Naive thymus-derived CD4-positive, alpha-beta T cell (primary cell): ENCODE measurements at regions of chr14 and their contacts with region 1.

Region 1: DNA sequence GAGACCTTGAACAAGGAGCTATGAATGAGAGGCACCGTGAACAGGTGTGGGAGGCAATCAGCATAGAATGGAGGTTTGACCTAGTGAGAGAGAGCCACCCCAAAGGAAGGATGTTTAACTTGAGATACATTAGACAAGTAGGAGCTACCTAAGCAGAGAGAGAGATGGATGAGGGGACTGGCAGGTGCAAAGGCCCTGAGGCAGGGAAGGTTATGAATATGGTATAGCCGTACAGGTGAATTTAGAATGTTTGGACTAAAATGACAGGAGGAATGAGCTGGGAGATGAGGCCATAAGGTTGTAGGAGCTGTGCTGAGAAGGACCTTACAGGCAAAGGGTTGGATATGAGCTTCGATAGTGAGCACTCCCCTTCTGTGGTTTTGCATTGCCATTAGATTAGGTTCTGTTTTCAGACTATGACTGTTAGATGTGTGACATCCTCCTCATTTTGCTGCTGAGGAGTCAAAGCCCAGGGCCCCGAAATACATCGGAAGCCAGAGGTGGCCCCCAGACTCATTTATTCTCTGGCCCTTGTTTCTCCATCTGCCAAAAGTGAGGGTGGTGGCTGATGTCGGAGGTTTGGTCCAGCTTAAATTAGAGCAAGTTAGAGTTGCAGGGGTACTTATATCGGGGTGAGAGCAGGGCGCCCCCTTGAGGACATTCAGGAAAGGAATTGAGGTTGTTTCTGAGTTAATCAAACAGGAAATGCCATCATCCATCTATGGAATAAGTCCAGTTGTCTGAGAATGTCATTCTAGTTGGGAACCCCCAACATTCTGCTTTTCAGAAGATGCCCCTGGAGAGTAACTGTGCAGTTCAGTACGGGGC is 29.4 kb downstream of the SLC24A4 start:
- DNase-seq: peak in 2 of 9 donors; percentile 6 to 33
- ATAC-seq: no peak
- H3K4me3 ChIP-seq: no peak overlapping the region
- H3K4me3 Mint-ChIP-seq: no peak overlapping the region
- H3K27ac ChIP-seq: no peak overlapping the region
- H3K27ac Mint-ChIP-seq: no peak overlapping the region
- H3K4me1 ChIP-seq: no peaks in the 10 kb centered on the region
- H3K4me1 Mint-ChIP-seq: peaks cover 0 to 6% (median 0%) of the 10 kb centered on the region in 7 donors
- H3K27me3 ChIP-seq: no peaks in the 10 kb centered on the region
- H3K27me3 Mint-ChIP-seq: peaks cover 0 to 39% (median 4%) of the 10 kb centered on the region in 5 donors

Region 2: DNA sequence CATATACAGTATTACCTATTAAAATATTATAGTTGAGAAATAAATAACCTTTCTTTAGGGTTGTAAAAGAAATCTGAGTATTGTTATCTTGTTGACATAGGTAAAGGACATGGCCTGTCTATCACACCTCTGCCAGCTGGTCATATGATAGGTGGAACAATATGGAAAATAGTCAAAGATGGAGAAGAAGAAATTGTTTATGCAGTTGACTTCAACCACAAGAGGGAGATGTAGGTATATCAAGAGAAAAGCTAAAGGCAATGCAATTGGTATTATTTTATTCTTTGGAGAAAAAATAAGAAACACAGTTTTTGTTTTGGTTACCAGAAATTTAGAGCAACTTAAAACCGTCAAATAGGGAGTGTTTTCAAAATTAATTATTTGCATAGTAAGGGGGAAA is 217.1 kb before region 1 on chr14:
- CTCF ChIA-PET with region 1: no interaction called
- POLR2A ChIA-PET with region 1: no interaction called
- intact Hi-C with region 1: loop called in 1 of 2 experiments (anchors 2 kb)
- DNase-seq: peak in 5 of 9 donors; percentile 10 to 37 (median 27)
- ATAC-seq: no peak
- H3K4me3 ChIP-seq: no peak overlapping the region
- H3K4me3 Mint-ChIP-seq: no peak overlapping the region
- H3K27ac ChIP-seq: no peak overlapping the region
- H3K27ac Mint-ChIP-seq: no peak overlapping the region
- H3K4me1 ChIP-seq: no peaks in the 10 kb centered on the region
- H3K4me1 Mint-ChIP-seq: peaks cover 5 to 19% (median 14%) of the 10 kb centered on the region in 7 donors
- H3K27me3 ChIP-seq: no peaks in the 10 kb centered on the region
- H3K27me3 Mint-ChIP-seq: no peaks in the 10 kb centered on the region

Region 3: DNA sequence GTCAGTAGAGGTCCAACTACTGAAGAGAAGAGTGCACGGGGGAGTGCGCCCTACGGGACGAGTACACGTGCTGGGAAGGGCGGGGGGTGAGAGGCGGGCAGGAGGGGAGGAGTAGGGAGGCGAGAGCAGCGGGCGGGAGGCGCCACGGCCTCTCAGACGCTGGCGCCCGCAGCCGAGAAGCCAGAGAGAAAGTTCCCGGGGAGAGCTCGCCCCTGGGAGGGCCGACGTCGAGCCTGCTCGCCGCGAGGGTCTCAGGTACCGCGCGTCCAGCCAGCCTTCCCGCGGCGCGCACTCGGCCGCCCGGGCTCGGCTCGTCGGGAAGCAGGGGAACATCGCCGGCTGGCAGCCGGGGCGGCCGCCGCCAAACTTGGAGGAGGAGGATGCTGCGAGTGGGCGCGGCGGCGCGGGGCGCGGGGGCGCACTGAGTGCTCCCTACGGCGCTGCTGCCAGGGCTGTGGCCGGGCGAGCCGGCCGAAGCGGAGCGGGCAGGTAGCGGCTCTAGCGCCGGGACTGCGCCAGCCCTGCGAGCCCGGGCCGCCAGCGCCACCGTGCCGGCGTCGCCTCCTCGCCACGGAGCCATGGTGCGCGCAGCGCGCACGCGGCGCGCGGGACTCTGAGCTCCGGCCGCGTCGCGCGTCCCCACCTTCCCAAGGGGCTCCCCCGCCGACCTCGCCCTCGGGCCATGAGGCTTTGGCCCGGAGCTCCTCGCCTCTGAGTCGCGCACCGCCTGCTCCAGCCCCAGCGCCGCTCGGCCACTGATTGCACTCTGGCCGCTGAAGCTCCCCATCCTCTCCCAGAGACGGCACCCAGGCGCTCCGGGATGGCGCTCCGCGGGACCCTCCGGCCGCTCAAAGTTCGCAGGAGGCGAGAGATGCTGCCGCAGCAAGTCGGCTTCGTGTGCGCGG is 29.1 kb before region 1 on chr14 and contains the start of gene SLC24A4:
- CTCF ChIA-PET with region 1: no interaction called
- POLR2A ChIA-PET with region 1: no interaction called
- intact Hi-C with region 1: no loop called
- DNase-seq: peak in 3 of 9 donors; percentile 3 to 30 (median 12)
- ATAC-seq: no peak
- H3K4me3 ChIP-seq: no peak within 1 kb of the TSS
- H3K4me3 Mint-ChIP-seq: peak within 1 kb of the TSS; percentile 53 to 82 (median 70)
- H3K27ac ChIP-seq: no peak within 1 kb of the TSS
- H3K27ac Mint-ChIP-seq: no peak within 1 kb of the TSS
- H3K4me1 ChIP-seq: no peaks in the 10 kb centered on the region
- H3K4me1 Mint-ChIP-seq: peaks cover 0 to 7% (median 3%) of the 10 kb centered on the region in 7 donors
- H3K27me3 ChIP-seq: no peaks in the 10 kb centered on the region
- H3K27me3 Mint-ChIP-seq: peaks cover 53 to 83% (median 67%) of the 10 kb centered on the region in 5 donors
- total RNA-seq, gene SLC24A4: 0.10 to 15.3 (median 2.1) TPM in 3 of 5 experiments, not detected in the others

Region 4: DNA sequence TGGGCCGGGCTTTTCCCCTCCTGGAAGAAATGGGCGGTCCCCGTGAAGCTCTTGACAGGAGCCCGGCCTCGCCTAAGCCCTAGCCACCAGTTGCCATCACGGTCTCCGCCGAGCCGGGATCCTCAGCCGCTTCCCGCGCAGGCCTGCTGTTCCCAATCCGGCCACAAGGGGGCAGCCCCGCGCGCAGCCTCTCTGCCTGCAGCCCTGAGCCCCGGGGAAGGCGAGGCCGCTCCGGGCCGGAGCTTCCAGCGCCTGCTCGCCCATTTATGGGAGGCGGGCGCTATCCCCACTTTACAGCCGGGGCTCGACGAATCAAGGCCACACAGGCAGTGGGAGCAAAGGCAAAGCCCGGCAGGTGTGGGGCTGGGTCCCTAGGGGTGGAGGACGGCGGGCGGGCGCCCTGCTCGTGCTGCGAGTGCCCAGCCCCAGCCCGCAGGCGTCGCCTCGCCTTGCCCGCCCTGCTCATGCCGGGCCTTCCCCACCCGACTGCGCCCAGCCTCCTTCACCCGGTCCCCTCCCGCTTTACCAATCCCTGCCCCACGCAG is 334.6 kb after region 1 on chr14:
- CTCF ChIA-PET with region 1: no interaction called
- POLR2A ChIA-PET with region 1: no interaction called
- intact Hi-C with region 1: loop called in 1 of 2 experiments (anchors 10 kb)
- DNase-seq: peak; percentile 20 to 84 (median 52)
- ATAC-seq: peak; percentile 89
- H3K4me3 ChIP-seq: no peak overlapping the region
- H3K4me3 Mint-ChIP-seq: no peak overlapping the region
- H3K27ac ChIP-seq: no peak overlapping the region
- H3K27ac Mint-ChIP-seq: peak overlapping the region in 2 of 9 donors; percentile 43
- H3K4me1 ChIP-seq: no peaks in the 10 kb centered on the region
- H3K4me1 Mint-ChIP-seq: peaks cover 0 to 5% (median 0%) of the 10 kb centered on the region in 7 donors
- H3K27me3 ChIP-seq: no peaks in the 10 kb centered on the region
- H3K27me3 Mint-ChIP-seq: no peaks in the 10 kb centered on the region